Activated CD4-positive, alpha-beta T cell treated with anti-CD3 and anti-CD28 coated beads for 36 hours (primary cell): ENCODE measurements at regions of chr11 and their contacts with region 1.

Region 1: DNA sequence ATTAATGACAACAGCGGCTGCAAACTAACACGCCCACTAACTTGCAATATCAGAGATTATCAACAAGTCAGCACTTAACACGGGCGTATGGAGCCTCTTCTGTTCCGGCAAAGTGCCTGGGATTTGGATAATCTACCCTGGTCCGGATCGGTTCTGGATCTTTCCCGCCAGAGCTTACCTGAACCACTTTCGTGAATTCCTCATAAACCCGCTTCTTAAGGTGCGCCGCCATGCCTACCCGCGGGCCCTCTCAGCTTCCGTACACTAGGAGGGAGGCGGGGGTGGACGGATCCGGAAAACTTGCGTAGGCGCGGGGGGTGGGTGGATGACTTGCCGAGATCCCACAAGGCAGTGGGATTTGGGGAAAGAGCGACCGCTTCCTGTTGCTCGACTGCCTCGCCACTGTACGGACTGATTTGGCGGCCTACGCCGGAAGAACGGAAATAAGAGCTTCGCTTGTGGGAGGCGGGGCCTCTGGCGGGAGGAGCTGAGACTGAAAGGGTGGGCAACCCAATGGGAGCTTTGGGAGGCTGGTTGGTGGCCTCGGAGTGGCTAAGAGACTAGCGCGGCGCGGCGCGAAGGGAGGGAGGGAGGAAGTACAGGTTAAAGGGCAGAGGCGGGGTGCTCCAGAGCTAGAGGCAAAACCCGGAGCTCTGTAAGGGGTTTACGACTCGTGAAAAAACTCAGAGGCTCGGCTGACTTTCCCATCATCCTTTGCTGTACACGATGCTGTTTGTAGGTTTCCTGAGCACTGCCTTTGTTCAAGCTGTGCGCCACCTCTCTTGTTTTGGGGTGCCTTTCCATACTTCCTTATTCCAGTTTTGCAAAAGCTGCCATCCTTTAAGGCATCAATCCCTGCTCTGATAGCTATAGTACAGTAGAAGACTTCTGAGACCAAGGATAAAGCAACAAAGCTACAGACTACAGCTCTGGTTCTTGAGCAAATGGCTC is at the start of gene INTS4:
- DNase-seq: peak; percentile 99
- ATAC-seq: peak; percentile 99
- H3K4me3 Mint-ChIP-seq: peak within 1 kb of the TSS; percentile 86
- H3K27ac Mint-ChIP-seq: peak within 1 kb of the TSS; percentile 97
- H3K4me1 Mint-ChIP-seq: peaks cover 29% of the 10 kb centered on the region
- H3K27me3 Mint-ChIP-seq: no peaks in the 10 kb centered on the region
- total RNA-seq, gene INTS4: 53.8 to 55.4 TPM

Region 2: DNA sequence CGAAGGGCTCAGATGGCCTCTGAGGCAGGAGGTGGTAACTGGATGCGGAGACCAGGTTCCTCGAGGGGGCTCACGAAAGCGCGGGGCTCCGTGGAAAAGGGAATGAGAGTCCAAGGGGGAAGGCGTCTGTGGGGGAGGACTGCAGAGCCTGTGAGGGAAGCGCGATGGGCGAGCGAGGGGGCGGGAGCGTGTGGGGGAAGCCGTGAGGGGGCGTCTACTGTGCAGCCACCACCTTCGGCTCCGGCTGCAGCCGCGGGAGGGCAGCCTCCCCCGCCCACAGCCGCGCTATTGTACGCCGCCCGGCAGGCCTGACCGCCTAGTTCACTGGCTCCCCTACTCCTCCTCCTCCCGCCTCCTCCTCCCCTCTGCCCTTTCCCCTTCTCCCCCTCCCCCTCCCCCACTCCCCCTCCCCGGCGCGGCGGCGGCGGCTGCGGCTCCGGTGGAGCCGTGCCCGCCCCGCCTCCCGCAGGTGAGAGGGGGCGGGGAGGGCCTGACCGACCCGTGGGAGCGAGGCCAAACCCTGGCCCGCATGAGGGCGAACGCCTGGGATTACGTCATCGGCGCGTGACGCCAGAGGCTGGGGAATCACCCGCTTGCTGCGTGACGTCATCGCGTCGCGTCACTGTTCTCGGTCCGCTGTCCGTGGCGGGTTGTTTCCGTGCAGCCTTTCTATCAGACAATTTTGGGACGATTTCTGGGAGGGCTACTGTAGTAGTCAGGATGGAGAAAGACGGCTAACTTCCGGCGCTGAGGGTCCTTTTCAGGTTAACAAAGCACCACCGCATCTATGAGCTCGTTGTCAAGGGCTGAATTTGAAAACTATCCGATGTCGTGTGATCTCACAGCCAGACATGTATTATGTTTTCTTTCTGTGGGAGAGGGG is 520.6 kb before region 1 on chr11 and contains the start of gene PAK1:
- CTCF ChIA-PET with region 1: no interaction called
- POLR2A ChIA-PET with region 1: no interaction called
- intact Hi-C with region 1: loop called in 1 of 2 experiments (anchors 10 kb)
- DNase-seq: peak; percentile 94
- ATAC-seq: peak; percentile 75
- H3K4me3 Mint-ChIP-seq: peak within 1 kb of the TSS; percentile 75
- H3K27ac Mint-ChIP-seq: peak within 1 kb of the TSS; percentile 77
- H3K4me1 Mint-ChIP-seq: peaks cover 4% of the 10 kb centered on the region
- H3K27me3 Mint-ChIP-seq: peaks cover 15% of the 10 kb centered on the region
- total RNA-seq, gene PAK1: 38.2 to 43.9 TPM

Region 3: GRCh38 chr11:77637345-77638165 is 357.1 kb before region 1 on chr11 and contains the start of gene CLNS1A:
- CTCF ChIA-PET with region 1: no interaction called
- POLR2A ChIA-PET with region 1: no interaction called
- intact Hi-C with region 1: loop called (anchors 1 to 10 kb)
- DNase-seq: peak; percentile 91
- ATAC-seq: peak; percentile 98
- H3K4me3 Mint-ChIP-seq: peak within 1 kb of the TSS; percentile 85
- H3K27ac Mint-ChIP-seq: peak within 1 kb of the TSS; percentile 94
- H3K4me1 Mint-ChIP-seq: peaks cover 40% of the 10 kb centered on the region
- H3K27me3 Mint-ChIP-seq: no peaks in the 10 kb centered on the region
- total RNA-seq, gene CLNS1A: 185 to 212 TPM

Region 4: GRCh38 chr11:77820563-77821348 is 173.9 kb before region 1 on chr11 and contains the starts of genes AAMDC and RSF1:
- CTCF ChIA-PET with region 1: interaction called, 10 read pairs
- POLR2A ChIA-PET with region 1: interaction called, 8 read pairs
- intact Hi-C with region 1: loop called (anchors 1 kb)
- DNase-seq: peak; percentile 99
- ATAC-seq: peak; percentile 88
- H3K4me3 Mint-ChIP-seq: peak within 1 kb of the TSS; percentile 97
- H3K27ac Mint-ChIP-seq: peak within 1 kb of the TSS; percentile 98
- H3K4me1 Mint-ChIP-seq: peaks cover 35% of the 10 kb centered on the region
- H3K27me3 Mint-ChIP-seq: no peaks in the 10 kb centered on the region
- total RNA-seq, gene AAMDC: 4.8 to 5.3 TPM
- total RNA-seq, gene RSF1: 49.9 to 59.2 TPM

Region 5: GRCh38 chr11:78045851-78046485 is 51.3 kb after region 1 on chr11:
- CTCF ChIA-PET with region 1: interaction called, 13 read pairs
- POLR2A ChIA-PET with region 1: interaction called, 3 read pairs
- intact Hi-C with region 1: loop called in 1 of 2 experiments (anchors 1 kb)
- DNase-seq: peak; percentile 87
- ATAC-seq: peak; percentile 98
- H3K4me3 Mint-ChIP-seq: no peak overlapping the region
- H3K27ac Mint-ChIP-seq: peak overlapping the region; percentile 47
- H3K4me1 Mint-ChIP-seq: peaks cover 10% of the 10 kb centered on the region
- H3K27me3 Mint-ChIP-seq: no peaks in the 10 kb centered on the region

Region 6: DNA sequence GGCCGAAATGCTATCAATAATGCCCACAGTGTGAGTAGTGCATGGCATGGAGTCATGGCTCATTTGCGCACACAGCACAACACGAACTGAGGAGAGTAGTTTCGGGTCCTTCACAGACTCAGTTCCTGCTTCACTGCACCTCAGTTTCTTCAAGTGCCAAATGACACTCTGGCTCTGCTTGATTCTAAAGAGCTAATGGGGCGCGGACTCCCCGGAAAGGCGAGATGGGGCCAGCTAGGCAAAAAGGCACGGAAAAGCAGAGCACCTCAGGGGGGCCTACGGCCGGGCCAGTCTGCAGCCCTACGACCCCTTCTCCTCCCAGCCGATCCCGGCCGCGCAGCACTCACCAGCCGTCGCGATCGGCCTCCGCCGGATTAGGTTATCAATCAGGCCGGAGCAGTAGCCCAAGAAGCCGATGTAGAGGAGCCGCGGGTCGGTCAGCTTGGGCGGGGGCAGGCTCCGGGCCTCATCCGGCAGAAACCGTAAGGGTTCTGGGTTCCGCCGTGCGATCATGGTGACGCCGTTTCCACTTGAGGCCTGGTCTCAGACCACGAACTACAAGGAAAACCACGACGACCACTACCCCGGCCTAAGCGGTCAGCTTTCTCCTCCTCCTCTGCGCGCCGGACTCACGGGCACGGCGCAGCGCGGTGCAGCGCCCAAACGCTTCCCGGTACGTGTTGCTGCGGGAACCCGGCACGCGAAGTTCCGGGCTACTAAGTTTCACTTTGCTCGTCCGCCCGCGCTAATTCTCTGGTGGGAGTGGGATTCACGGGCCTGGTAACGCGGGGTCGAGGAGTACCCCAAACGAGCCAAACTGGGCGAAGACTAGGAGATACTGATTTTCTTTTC is 84.8 kb after region 1 on chr11 and contains the start of gene NDUFC2:
- CTCF ChIA-PET with region 1: interaction called, 4 read pairs
- POLR2A ChIA-PET with region 1: interaction called, 9 read pairs
- intact Hi-C with region 1: loop called in 1 of 2 experiments (anchors 1 kb)
- DNase-seq: peak; percentile 81
- ATAC-seq: peak; percentile 83
- H3K4me3 Mint-ChIP-seq: peak within 1 kb of the TSS; percentile 91
- H3K27ac Mint-ChIP-seq: peak within 1 kb of the TSS; percentile 90
- H3K4me1 Mint-ChIP-seq: peaks cover 49% of the 10 kb centered on the region
- H3K27me3 Mint-ChIP-seq: no peaks in the 10 kb centered on the region
- total RNA-seq, gene NDUFC2: 214 to 236 TPM

Region 7: DNA sequence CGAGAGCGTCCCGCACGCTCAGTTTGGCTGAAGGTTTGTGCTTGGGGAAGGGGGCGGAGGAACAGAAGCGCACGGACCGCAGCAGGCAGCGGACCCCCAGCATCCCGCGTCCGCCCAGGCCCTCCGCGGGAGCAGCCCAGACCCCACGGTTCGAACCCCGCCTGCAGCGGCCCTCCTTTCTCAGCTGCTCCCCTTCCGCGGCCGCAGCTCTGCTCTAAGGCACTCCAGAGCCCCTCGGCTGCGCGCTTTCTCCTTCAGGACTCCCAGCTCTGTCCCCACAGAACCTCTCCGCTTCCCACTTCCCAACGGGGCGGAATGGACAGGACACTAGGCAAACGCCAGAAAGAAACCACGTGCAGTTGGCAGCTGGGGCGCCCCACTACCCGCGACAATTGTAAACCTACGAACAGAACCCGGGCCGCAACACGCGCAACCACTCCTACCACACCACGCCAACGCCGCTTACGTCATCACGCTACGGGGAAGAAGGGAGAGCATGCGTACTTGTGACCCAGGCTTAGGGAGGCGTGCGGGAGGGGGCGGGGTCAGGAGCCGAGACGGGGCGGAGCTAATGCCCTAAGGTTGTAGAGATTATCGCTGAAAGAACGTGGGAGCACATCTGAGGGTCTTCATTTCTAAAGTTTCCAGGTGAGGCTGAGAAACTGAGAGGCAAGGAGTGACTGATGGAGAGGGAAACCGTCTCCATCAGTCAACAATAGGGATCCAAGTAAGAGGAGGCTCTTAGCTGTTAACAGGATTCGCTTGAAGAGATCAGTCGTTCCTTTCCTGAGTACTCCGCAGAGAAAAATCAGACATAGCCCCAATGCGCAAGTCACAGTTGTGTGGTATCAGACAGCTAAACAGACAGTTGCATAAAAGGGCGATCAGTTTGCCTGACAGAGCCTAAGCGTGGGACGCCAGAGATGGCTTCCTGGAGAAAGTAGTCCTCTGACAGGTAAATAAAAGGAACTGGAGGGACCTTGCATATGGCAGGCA is 580.0 kb after region 1 on chr11 and contains the start of gene NARS2:
- CTCF ChIA-PET with region 1: no interaction called
- POLR2A ChIA-PET with region 1: no interaction called
- intact Hi-C with region 1: loop called in 1 of 2 experiments (anchors 2 kb)
- DNase-seq: peak; percentile 100
- ATAC-seq: peak; percentile 99
- H3K4me3 Mint-ChIP-seq: peak within 1 kb of the TSS; percentile 97
- H3K27ac Mint-ChIP-seq: peak within 1 kb of the TSS; percentile 89
- H3K4me1 Mint-ChIP-seq: peaks cover 28% of the 10 kb centered on the region
- H3K27me3 Mint-ChIP-seq: no peaks in the 10 kb centered on the region
- total RNA-seq, gene NARS2: 22.9 to 33.4 TPM